Activated CD8-positive, alpha-beta T cell treated with anti-CD3 and anti-CD28 coated beads for 36 hours (primary cell): ENCODE measurements at regions of chr15 and their contacts with region 1.

Region 1: GRCh38 chr15:26521691-26522198 is 251.1 kb downstream of the GABRB3 start:
- DNase-seq: no peak
- ATAC-seq: no peak
- H3K4me3 Mint-ChIP-seq: no peak overlapping the region
- H3K27ac Mint-ChIP-seq: no peak overlapping the region
- H3K4me1 Mint-ChIP-seq: no peaks in the 10 kb centered on the region
- H3K27me3 Mint-ChIP-seq: no peaks in the 10 kb centered on the region
- CTCF ChIP-seq: no peak

Region 2: DNA sequence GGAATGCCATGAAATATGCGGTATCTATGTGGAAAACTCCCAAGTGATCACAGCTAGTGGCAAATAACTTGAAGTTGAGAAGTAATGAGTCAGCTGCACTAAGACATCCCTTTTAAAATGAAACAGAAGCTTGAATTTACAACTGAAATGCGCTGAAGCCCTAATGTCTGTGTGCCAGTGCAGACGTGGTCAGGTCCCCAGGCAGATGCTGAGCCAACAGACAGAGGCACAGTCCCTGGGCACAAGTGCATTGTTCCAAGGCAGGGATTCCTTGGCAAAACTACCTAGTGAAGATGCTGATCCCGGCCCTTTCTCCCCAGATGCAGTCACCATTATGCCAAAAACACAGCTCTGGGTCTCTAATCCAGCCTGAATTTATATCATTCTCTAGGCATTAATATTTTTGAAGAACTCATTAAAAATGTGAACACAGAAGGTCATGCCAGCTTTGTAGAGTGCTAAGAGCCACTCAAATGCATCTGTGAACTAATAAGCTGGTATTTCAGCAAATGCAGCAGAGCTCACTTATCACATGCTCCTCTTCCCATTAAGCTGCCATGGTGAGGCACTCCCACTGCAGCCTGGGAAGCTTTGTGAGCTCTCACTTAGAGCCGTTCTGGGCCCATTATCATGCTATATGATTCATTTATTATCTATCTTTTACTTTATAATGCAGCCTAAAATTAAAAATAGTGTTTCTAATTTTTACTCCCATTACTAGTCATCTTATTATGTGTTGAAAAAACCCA is 51.0 kb after region 1 on chr15:
- CTCF ChIA-PET with region 1: no interaction called
- POLR2A ChIA-PET with region 1: no interaction called
- intact Hi-C with region 1: loop called (anchors 10 kb)
- DNase-seq: no peak
- ATAC-seq: no peak
- H3K4me3 Mint-ChIP-seq: no peak overlapping the region
- H3K27ac Mint-ChIP-seq: no peak overlapping the region
- H3K4me1 Mint-ChIP-seq: no peaks in the 10 kb centered on the region
- H3K27me3 Mint-ChIP-seq: no peaks in the 10 kb centered on the region
- CTCF ChIP-seq: no peak